ENCODE measurements at regions of chr12 and their contacts with region 1.

Region 1: DNA sequence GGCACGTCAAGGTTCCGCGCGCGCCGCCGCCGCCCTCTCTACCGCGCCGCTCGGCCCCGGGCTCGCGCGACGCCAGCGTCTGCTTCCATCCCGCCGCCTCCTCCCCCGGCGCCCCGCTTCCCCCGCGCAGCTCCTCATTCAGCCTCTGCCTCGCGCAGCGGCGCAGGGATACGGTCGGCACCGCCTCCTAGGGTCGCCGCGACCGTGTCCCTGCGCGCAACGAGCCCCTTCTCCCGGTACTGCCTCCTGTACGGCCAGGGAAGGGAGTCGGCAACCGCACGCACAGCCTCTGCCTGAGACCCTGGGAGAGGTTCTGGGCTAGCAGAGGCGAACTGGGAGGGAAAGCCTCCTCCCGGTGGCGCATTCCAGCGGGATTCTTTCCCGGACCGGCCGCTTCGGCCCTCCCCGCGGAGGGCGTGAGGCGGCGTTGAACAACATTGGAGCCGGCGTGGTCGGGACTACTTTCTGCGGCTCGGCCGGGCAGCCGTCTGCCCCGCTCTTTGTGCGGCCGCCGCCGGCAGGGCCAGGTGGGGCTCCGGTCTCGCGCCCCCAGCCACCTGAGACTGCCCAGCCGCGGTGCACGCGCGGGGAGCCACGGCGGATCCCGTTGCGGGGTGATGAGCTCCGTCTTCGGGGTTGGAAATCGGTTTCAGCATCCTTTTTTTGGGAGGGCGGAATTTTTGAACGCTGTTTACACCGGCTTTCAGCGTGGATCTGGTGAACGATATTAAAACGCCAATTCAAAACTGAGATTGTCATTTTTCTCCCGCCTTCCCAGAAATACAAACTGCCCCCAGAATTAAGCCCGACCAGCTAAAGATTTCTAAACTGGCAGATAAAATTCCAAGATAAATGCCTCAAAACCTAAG is at the start of gene LRP6:
- DNase-seq: peak; percentile 93
- H3K4me3 ChIP-seq: peak within 1 kb of the TSS; percentile 65 to 96 (median 88)
- H3K27ac ChIP-seq: peak within 1 kb of the TSS; percentile 100
- H3K4me1 ChIP-seq: peaks cover 12% of the 10 kb centered on the region
- H3K27me3 ChIP-seq: no peaks in the 10 kb centered on the region
- CTCF ChIP-seq: no peak
- POLR2A ChIP-seq: peak; percentile 92
- total RNA-seq, gene LRP6: 40.1 and 41.7 TPM in 2 replicates

Region 2: GRCh38 chr12:11969437-11970154 is 297.5 kb before region 1 on chr12:
- CTCF ChIA-PET with region 1: no interaction called
- POLR2A ChIA-PET with region 1: no interaction called
- dilution Hi-C with region 1: no loop called
- intact Hi-C with region 1: no loop called
- DNase-seq: no peak
- H3K4me3 ChIP-seq: no peak overlapping the region
- H3K27ac ChIP-seq: no peak overlapping the region
- H3K4me1 ChIP-seq: peaks cover 12% of the 10 kb centered on the region
- H3K27me3 ChIP-seq: peaks cover 15 to 16% of the 10 kb centered on the region in 2 experiments
- CTCF ChIP-seq: no peak
- POLR2A ChIP-seq: no peak

Region 3: DNA sequence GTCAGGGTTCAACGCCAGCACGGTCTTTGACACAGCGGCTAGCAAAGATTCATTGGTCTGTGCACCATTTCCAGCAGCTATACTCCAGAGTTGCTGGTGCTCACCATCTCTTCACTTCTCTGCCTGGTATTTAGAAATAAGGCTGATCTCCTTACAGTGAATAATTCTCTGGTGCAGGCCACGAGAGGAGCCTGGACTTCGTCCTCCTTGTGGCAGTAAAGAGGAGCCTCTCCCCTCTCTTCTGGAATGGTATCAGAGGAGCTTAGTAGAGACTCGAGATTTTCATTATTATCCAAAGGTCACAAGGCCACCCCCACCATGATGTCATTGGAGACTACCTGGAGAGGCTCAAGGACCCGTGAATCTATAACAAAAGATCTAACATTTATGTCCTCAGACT is 227.2 kb before region 1 on chr12:
- CTCF ChIA-PET with region 1: interaction called, 3 read pairs
- POLR2A ChIA-PET with region 1: no interaction called
- dilution Hi-C with region 1: no loop called
- intact Hi-C with region 1: loop called (anchors 1 kb)
- DNase-seq: no peak
- H3K4me3 ChIP-seq: no peak overlapping the region
- H3K27ac ChIP-seq: no peak overlapping the region
- H3K4me1 ChIP-seq: no peaks in the 10 kb centered on the region
- H3K27me3 ChIP-seq: peaks cover 4 to 6% of the 10 kb centered on the region in 2 experiments
- CTCF ChIP-seq: no peak
- POLR2A ChIP-seq: no peak

Region 4: GRCh38 chr12:12081836-12082497 is 185.1 kb before region 1 on chr12:
- CTCF ChIA-PET with region 1: interaction called, 25 read pairs
- POLR2A ChIA-PET with region 1: interaction called, 6 read pairs
- dilution Hi-C with region 1: no loop called
- intact Hi-C with region 1: loop called (anchors 1 kb)
- DNase-seq: peak; percentile 79
- H3K4me3 ChIP-seq: no peak overlapping the region
- H3K27ac ChIP-seq: peak overlapping the region; percentile 40
- H3K4me1 ChIP-seq: peaks cover 5% of the 10 kb centered on the region
- H3K27me3 ChIP-seq: no peaks in the 10 kb centered on the region
- CTCF ChIP-seq: peak; percentile 17 to 29
- POLR2A ChIP-seq: no peak

Region 5: DNA sequence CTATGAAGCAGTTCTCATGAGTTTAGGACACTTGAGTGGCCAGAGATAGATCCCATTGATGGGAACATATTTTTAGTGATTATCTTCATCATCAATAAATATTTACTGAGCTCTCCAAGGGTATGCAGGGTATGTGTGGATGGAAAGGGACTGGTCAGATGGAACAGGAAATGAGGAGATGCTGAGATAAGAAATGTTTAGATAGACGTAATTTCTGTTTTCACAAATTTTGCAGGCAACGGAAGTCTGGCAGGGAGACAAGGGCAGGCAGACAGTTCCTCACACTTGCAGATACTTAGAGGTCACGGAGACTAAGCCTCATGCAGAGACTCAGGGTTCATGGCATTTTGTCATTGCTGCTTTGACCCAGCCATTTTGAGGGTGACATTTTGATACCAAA is 172.1 kb before region 1 on chr12:
- CTCF ChIA-PET with region 1: no interaction called
- POLR2A ChIA-PET with region 1: interaction called, 4 read pairs
- dilution Hi-C with region 1: no loop called
- intact Hi-C with region 1: loop called (anchors 5 kb)
- DNase-seq: peak; percentile 72
- H3K4me3 ChIP-seq: no peak overlapping the region
- H3K27ac ChIP-seq: no peak overlapping the region
- H3K4me1 ChIP-seq: peaks cover 33% of the 10 kb centered on the region
- H3K27me3 ChIP-seq: no peaks in the 10 kb centered on the region
- CTCF ChIP-seq: no peak
- POLR2A ChIP-seq: no peak

Region 6: DNA sequence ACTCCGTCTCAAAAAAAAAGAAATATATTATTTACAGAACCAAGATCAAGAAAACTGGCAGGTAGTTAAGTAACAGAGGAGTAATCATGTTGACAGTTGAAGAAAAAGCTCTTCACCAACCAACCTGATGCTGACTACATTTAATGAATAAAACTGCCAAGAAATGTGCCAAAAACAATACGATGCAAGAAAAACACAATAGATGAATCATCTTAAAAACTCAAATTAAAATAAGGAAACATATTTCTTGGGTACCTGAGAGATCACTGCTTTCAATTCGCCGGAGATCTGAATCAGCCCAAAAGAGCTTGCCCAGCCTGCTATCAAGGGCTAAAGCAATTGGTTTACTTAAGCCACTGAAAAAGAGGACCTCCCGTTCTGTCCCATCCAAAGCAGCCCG is 120.0 kb before region 1 on chr12:
- CTCF ChIA-PET with region 1: no interaction called
- POLR2A ChIA-PET with region 1: interaction called, 5 read pairs
- dilution Hi-C with region 1: no loop called
- intact Hi-C with region 1: loop called (anchors 10 kb)
- DNase-seq: peak; percentile 84
- H3K4me3 ChIP-seq: no peak overlapping the region
- H3K27ac ChIP-seq: peak overlapping the region; percentile 24
- H3K4me1 ChIP-seq: peaks cover 10% of the 10 kb centered on the region
- H3K27me3 ChIP-seq: no peaks in the 10 kb centered on the region
- CTCF ChIP-seq: no peak
- POLR2A ChIP-seq: no peak

Region 7: GRCh38 chr12:12219664-12220063 is 47.4 kb before region 1 on chr12:
- CTCF ChIA-PET with region 1: no interaction called
- POLR2A ChIA-PET with region 1: no interaction called
- dilution Hi-C with region 1: no loop called
- intact Hi-C with region 1: no loop called
- DNase-seq: no peak
- H3K4me3 ChIP-seq: no peak overlapping the region
- H3K27ac ChIP-seq: no peak overlapping the region
- H3K4me1 ChIP-seq: peaks cover 8% of the 10 kb centered on the region
- H3K27me3 ChIP-seq: no peaks in the 10 kb centered on the region
- CTCF ChIP-seq: no peak
- POLR2A ChIP-seq: no peak

Region 8: GRCh38 chr12:12239127-12239526 is 28.0 kb before region 1 on chr12:
- CTCF ChIA-PET with region 1: no interaction called
- POLR2A ChIA-PET with region 1: interaction called, 10 read pairs
- dilution Hi-C with region 1: no loop called
- intact Hi-C with region 1: no loop called
- DNase-seq: peak; percentile 62
- H3K4me3 ChIP-seq: no peak overlapping the region
- H3K27ac ChIP-seq: peak overlapping the region; percentile 34
- H3K4me1 ChIP-seq: peaks cover 12% of the 10 kb centered on the region
- H3K27me3 ChIP-seq: no peaks in the 10 kb centered on the region
- CTCF ChIP-seq: no peak
- POLR2A ChIP-seq: no peak

Region 9: DNA sequence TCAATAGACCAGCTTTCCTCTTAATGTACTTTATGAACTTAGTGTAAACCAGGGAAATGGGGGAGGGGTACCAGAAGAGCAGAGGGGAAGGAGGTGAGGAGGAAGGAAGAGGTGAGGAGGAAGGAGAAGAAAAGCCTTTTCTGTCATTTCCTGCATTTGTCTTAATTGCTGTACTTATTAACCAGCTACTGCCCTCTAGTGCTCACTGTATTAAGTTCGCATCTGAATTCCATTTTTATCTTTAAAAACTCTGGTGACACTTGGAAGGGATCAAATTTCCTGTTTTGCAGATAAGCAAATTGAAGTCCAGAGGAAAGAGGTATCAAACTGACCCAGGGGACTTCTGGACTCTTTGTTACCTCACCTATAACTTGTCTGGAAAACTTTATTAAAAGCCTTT is 60.7 kb after region 1 on chr12:
- CTCF ChIA-PET with region 1: interaction called, 11 read pairs
- POLR2A ChIA-PET with region 1: interaction called, 4 read pairs
- dilution Hi-C with region 1: no loop called
- intact Hi-C with region 1: loop called (anchors 2 kb)
- DNase-seq: peak; percentile 71
- H3K4me3 ChIP-seq: no peak overlapping the region
- H3K27ac ChIP-seq: peak overlapping the region; percentile 48
- H3K4me1 ChIP-seq: peaks cover 8% of the 10 kb centered on the region
- H3K27me3 ChIP-seq: no peaks in the 10 kb centered on the region
- CTCF ChIP-seq: peak; percentile 49 to 61
- POLR2A ChIP-seq: no peak